Activated B cell treated with CpG ODN at 0.5 μM for 24 hours (primary cell): ENCODE measurements at regions of chr5 and their contacts with region 1.

Region 1: GRCh38 chr5:177113566-177114424 is 19.8 kb upstream of the NSD1 start:
- DNase-seq: peak; percentile 73
- ATAC-seq: peak; percentile 62
- H3K4me3 Mint-ChIP-seq: no peak overlapping the region
- H3K27ac Mint-ChIP-seq: no peak overlapping the region
- H3K4me1 Mint-ChIP-seq: peaks cover 20% of the 10 kb centered on the region
- H3K27me3 Mint-ChIP-seq: no peaks in the 10 kb centered on the region
- CTCF ChIP-seq: no peak

Region 2: GRCh38 chr5:176660860-176661641 is 452.7 kb before region 1 on chr5:
- CTCF ChIA-PET with region 1: interaction called, 74 read pairs
- POLR2A ChIA-PET with region 1: interaction called, 3 read pairs
- intact Hi-C with region 1: loop called (anchors 1 kb)
- DNase-seq: peak; percentile 72
- ATAC-seq: peak; percentile 84
- H3K4me3 Mint-ChIP-seq: no peak overlapping the region
- H3K27ac Mint-ChIP-seq: no peak overlapping the region
- H3K4me1 Mint-ChIP-seq: peaks cover 29% of the 10 kb centered on the region
- H3K27me3 Mint-ChIP-seq: peaks cover 18% of the 10 kb centered on the region
- CTCF ChIP-seq: no peak

Region 3: DNA sequence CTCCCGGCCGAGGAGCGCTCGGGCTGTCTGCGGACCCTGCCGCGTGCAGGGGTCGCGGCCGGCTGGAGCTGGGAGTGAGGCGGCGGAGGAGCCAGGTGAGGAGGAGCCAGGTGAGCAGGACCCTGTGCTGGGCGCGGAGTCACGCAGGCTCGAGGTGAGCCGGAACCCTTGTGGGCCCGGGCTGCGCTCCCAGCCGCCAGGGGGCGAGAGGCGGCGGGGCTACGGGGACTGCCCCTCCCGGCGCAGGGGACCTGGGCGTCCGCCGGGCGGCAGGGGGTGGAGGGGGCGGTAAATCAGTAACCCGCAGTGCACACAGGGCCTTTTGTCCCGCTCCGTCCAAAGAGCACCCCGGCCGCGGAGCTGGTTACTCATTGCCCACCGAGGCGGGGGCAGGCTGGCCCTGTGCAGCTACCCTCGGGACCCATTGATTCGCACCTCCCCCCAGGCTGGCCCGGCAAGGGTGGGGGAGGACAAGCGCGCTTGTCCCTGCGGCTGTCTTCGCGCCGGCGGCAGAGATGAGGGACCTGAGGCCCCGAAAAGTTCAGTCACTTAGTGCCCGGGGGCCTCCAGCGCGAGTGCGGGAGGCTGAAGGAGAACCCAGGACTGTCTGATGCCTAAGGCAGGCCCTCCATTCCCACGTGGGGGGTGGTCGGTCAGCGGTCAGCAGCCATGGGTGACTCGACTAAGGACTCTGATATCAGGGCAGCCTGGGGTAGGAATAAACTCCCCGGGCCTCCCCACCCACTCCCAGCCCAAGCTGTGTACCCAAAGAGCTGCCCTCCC is 26.7 kb before region 1 on chr5:
- CTCF ChIA-PET with region 1: interaction called, 15 read pairs
- POLR2A ChIA-PET with region 1: no interaction called
- intact Hi-C with region 1: loop called (anchors 1 kb)
- DNase-seq: peak; percentile 71
- ATAC-seq: peak; percentile 82
- H3K4me3 Mint-ChIP-seq: peak overlapping the region; percentile 50
- H3K27ac Mint-ChIP-seq: no peak overlapping the region
- H3K4me1 Mint-ChIP-seq: peaks cover 19% of the 10 kb centered on the region
- H3K27me3 Mint-ChIP-seq: peaks cover 6% of the 10 kb centered on the region
- CTCF ChIP-seq: no peak

Region 4: GRCh38 chr5:177209610-177210009 is 95.8 kb after region 1 on chr5:
- CTCF ChIA-PET with region 1: interaction called, 3 read pairs
- POLR2A ChIA-PET with region 1: no interaction called
- intact Hi-C with region 1: loop called (anchors 5 kb)
- DNase-seq: no peak
- ATAC-seq: no peak
- H3K4me3 Mint-ChIP-seq: no peak overlapping the region
- H3K27ac Mint-ChIP-seq: no peak overlapping the region
- H3K4me1 Mint-ChIP-seq: no peaks in the 10 kb centered on the region
- H3K27me3 Mint-ChIP-seq: no peaks in the 10 kb centered on the region
- CTCF ChIP-seq: no peak

Region 5: DNA sequence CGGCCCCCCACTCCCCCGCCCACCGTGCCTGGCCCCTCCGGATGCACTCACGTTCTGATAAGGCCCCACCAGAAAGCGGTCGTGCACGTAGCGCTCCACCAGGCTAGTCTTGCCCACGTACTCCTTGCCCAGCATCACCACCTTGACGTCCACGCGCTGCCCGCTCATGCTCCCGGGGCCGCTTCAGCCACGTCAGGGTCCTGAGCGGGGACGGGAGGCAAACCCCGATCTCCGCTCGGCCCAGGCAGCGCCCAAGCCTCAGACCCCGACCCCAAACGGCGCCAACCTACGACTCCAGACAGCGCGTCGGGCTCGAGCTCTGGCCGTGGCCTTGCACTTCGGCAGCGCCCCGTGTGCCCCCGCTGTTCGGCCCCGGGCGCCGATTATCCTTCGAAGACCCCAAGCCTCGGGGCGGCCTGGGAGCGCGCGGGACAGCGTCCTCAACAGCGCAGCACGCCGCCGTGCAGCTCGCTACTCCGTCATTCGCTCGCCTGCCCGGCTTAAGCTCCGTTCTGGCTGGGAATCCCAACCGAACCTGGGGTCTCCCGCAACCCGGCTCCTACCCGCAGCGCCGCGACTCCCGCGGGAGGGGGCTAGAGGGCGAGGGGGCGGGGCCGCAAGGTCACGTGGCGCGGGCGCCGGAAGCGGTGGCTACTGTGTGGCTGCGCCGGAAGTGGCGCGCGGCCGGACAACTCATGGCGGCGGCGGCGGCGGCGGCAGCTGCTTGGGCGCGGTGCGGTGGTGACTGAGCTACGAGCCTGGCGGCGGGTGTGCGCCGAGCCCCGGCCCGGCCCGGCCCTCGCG is 189.5 kb after region 1 on chr5 and contains the starts of genes PRELID1 and RAB24:
- CTCF ChIA-PET with region 1: interaction called, 4 read pairs
- POLR2A ChIA-PET with region 1: no interaction called
- intact Hi-C with region 1: loop called (anchors 2 kb)
- DNase-seq: peak; percentile 93
- ATAC-seq: peak; percentile 41
- H3K4me3 Mint-ChIP-seq: peak within 1 kb of the TSS; percentile 90
- H3K27ac Mint-ChIP-seq: peak within 1 kb of the TSS; percentile 89
- H3K4me1 Mint-ChIP-seq: peaks cover 75% of the 10 kb centered on the region
- H3K27me3 Mint-ChIP-seq: no peaks in the 10 kb centered on the region
- CTCF ChIP-seq: no peak
- total RNA-seq, gene PRELID1: 141 and 160 TPM in 2 replicates
- total RNA-seq, gene RAB24: 35.6 and 36.3 TPM in 2 replicates